K562 (cell line): ENCODE measurements at regions of chr9 and their contacts with region 1.

Region 1: GRCh38 chr9:87662808-87663528 is 63.0 kb upstream of the CTSL start:
- DNase-seq: peak; percentile 74 to 84 (median 80)
- ATAC-seq: peak; percentile 99
- H3K4me3 ChIP-seq: no peak overlapping the region
- H3K27ac ChIP-seq: no peak overlapping the region
- H3K4me1 ChIP-seq: peaks cover 0 to 7% of the 10 kb centered on the region in 2 experiments; a peak in 4 of 5 replicates
- H3K27me3 ChIP-seq: no peaks in the 10 kb centered on the region
- CTCF ChIP-seq: peak; percentile 78 to 87 (median 84)
- EP300 ChIP-seq: no peak
- POLR2A ChIP-seq: no peak
- RAD21 ChIP-seq: peak; percentile 59 to 85

Region 2: GRCh38 chr9:86434039-86434726 is 1228.8 kb before region 1 on chr9:
- CTCF ChIA-PET with region 1: no interaction called
- POLR2A ChIA-PET with region 1: no interaction called
- in situ Hi-C with region 1: loop called (anchors 25 kb)
- intact Hi-C with region 1: no loop called
- DNase-seq: peak in 3 of 4 experiments; percentile 5 to 29 (median 22)
- ATAC-seq: peak; percentile 61; the same call in 1 of the 3 replicates
- H3K4me3 ChIP-seq: no peak overlapping the region
- H3K27ac ChIP-seq: no peak overlapping the region
- H3K4me1 ChIP-seq: no peaks in the 10 kb centered on the region
- H3K27me3 ChIP-seq: peaks cover 0 to 7% of the 10 kb centered on the region in 2 experiments; a peak in 1 of 5 replicates
- CTCF ChIP-seq: peak; percentile 40 to 71 (median 61); a peak in 5 of 6 replicates
- EP300 ChIP-seq: no peak
- POLR2A ChIP-seq: no peak
- RAD21 ChIP-seq: peak; percentile 39 to 62; a peak in 3 of 4 replicates

Region 3: GRCh38 chr9:87497604-87498045 is 165.3 kb before region 1 on chr9 and contains the start of gene DAPK1:
- CTCF ChIA-PET with region 1: no interaction called
- POLR2A ChIA-PET with region 1: no interaction called
- in situ Hi-C with region 1: no loop called
- intact Hi-C with region 1: loop called (anchors 10 kb)
- DNase-seq: peak; percentile 69 to 81 (median 73)
- ATAC-seq: peak; percentile 89
- H3K4me3 ChIP-seq: peak within 1 kb of the TSS; percentile 50
- H3K27ac ChIP-seq: peak within 1 kb of the TSS; percentile 43; the same call in 2 of the 3 replicates
- H3K4me1 ChIP-seq: peaks cover 21 to 28% of the 10 kb centered on the region in 2 experiments; a peak in 4 of 5 replicates
- H3K27me3 ChIP-seq: no peaks in the 10 kb centered on the region
- CTCF ChIP-seq: peak; percentile 18 to 53 (median 26); a peak in 4 of 6 replicates
- EP300 ChIP-seq: no peak
- POLR2A ChIP-seq: 0 out of 2 replicates have a peak, but pooled peaks have one; percentile 39
- RAD21 ChIP-seq: peak in 1 of 2 experiments; percentile 47; a peak in 3 of 4 replicates
- polyA plus RNA-seq, gene DAPK1: 1.7 to 2.3 TPM

Region 4: GRCh38 chr9:87642330-87643106 is 20.4 kb before region 1 on chr9:
- CTCF ChIA-PET with region 1: no interaction called
- POLR2A ChIA-PET with region 1: no interaction called
- in situ Hi-C with region 1: no loop called
- intact Hi-C with region 1: no loop called
- DNase-seq: no peak
- ATAC-seq: no peak
- H3K4me3 ChIP-seq: no peak overlapping the region
- H3K27ac ChIP-seq: no peak overlapping the region
- H3K4me1 ChIP-seq: no peaks in the 10 kb centered on the region
- H3K27me3 ChIP-seq: no peaks in the 10 kb centered on the region
- CTCF ChIP-seq: 0 out of 6 replicates have a peak, but pooled peaks of 1 of the 3 experiments have one; percentile 5
- EP300 ChIP-seq: no peak
- POLR2A ChIP-seq: no peak
- RAD21 ChIP-seq: no peak; a peak in 1 of 4 replicates